Cardiac septum (tissue), 1 donor: ENCODE measurements at regions of chr14 and their contacts with region 1.

Region 1: GRCh38 chr14:22852940-22853767 is 16.8 kb downstream of the MMP14 start:
- DNase-seq: peak; percentile 94

Region 2: DNA sequence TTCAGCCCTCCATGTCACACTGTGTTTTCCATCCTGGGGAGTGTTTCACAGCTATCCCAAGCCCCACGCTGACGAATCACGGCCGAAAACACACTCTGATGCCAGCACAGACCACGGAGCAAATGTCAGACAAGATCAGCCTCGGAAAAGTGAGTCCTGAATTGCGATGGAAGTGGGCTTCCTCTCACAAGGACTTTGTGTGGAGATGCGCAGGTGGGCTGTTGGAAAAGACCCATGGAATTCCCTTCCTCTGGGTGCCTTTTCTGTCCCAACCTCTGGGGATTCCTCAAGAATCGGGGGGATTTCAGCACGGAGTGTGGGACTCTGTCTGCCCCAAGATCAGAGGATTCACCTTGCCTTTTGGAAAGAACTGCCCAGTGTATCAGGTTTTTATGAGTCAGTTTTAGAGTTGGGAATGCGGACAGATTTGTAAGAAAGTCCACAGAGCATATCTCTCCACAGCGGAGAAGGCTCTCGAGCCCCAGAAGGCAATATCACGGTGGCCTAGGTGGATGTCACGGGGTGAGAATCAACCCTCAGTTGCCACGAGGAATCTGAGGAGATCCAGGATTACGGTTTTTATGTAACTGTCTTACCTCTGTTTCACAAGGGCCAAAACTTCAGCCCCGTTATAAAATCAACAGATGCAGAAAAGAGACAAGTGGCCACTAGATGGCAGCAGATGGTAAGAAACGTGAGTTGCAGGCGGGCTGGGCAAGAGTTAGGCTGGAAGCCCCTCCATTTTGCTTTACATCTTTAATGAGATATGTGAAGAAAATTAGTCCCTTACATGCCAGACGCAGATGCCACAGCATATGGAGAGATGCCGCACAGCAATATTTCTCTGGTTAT is 466.0 kb before region 1 on chr14:
- intact Hi-C with region 1: loop called (anchors 10 kb)
- DNase-seq: no peak

Region 3: GRCh38 chr14:22653012-22653621 is 200.0 kb before region 1 on chr14:
- intact Hi-C with region 1: loop called (anchors 5 kb)
- DNase-seq: no peak

Region 4: DNA sequence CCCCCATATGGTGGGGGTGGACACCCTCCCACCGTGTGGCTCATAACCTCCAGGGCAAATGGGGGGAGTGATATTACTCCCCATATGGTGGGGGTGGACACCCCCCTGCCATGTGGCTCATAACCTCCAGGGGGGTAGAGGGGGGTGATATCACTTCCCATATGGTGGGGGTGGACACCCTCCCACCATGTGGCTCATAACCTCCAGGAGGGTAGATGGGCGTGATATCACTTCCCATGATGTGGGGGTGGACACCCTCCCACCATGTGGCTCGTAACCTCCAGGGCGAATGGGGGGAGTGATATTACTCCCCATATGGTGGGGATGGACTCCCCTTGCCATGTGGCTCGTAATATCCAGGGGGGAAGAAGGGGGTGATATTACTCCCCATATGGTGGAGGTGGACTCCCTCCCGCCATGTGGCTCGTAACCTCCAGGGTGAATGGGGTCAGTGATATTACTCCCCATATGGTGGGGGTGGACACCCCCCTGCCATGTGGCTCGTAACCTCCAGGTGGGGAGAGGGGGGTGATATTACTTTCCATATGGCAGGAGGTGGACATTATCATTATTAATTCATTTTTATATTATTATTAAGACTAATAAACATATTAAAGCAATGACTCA is 137.9 kb before region 1 on chr14:
- intact Hi-C with region 1: no loop called
- DNase-seq: no peak

Region 5: DNA sequence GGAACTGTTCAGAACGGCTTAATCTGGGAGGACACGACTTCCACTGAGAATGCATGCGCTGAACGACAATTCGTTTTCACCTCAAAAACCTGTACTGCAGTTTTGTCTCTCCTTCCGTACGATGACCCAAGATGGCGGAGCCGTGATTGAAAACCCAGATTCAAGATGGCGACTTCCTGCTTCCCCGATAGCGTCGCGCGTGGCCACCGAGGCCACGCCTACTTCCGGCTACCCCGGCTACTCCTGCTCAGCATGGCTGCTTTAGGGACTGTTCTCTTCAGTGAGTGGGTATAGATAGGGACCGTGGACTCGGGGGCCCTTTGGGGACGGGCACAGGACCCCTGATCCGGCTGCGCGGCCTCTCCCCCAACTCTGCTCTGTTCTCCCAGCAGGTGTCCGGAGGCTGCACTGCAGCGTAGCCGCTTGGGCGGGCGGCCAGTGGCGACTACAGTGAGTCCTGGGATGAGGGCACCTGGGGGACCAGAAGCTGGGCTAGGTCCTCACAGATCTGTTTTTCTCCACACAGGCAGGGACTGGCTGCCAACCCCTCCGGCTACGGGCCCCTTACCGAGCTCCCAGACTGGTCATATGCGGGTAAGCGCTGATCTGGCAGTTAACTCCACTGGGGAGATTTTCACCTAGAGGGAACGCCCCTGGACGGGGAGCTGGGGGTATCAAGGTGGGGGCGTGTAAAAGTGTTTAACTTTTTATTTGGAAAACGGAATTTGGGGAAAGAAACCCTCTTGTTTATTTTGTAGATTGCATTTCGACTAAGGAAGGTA is 23.3 kb before region 1 on chr14 and contains the start of gene MRPL52:
- intact Hi-C with region 1: loop called (anchors 2 kb)
- DNase-seq: peak; percentile 94
- total RNA-seq, gene MRPL52: 96.7 TPM